Brain microvascular endothelial cell (primary cell): ENCODE measurements at regions of chrX and their contacts with region 1.

Region 1: GRCh38 chrX:11111038-11111851 is at the start of gene HCCS:
- DNase-seq: peak; percentile 79
- H3K4me3 ChIP-seq: peak within 1 kb of the TSS; percentile 83
- H3K27ac ChIP-seq: peak within 1 kb of the TSS; percentile 94
- H3K27me3 ChIP-seq: no peaks in the 10 kb centered on the region
- CTCF ChIP-seq: peak; percentile 14

Region 2: GRCh38 chrX:10189317-10190268 is 921.7 kb before region 1 on chrX:
- in situ Hi-C with region 1: loop called (anchors 25 kb)
- DNase-seq: peak; percentile 65
- H3K4me3 ChIP-seq: no peak overlapping the region
- H3K27ac ChIP-seq: peak overlapping the region; percentile 29
- H3K27me3 ChIP-seq: no peaks in the 10 kb centered on the region
- CTCF ChIP-seq: peak; percentile 83

Region 3: DNA sequence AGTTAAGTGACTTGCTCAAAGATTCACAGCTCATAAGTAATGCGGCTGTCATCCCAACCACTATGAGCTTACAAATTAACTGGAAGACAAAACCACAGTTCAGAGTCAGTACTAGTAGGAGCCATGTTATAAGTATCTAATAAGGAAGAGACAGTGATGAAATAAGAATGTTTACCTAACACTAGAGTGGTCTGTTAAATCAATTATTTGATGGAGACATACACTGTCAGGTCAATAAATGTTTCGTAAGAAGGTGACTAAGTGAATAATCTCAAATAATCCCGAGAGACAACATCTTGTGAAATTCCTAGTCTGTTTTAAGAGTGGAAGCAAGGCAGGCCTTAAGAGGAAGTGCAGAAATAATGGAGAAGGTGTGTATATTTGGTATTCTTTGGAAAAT is 156.2 kb after region 1 on chrX:
- in situ Hi-C with region 1: no loop called
- DNase-seq: no peak
- H3K4me3 ChIP-seq: no peak overlapping the region
- H3K27ac ChIP-seq: no peak overlapping the region
- H3K27me3 ChIP-seq: no peaks in the 10 kb centered on the region
- CTCF ChIP-seq: no peak

Region 4: DNA sequence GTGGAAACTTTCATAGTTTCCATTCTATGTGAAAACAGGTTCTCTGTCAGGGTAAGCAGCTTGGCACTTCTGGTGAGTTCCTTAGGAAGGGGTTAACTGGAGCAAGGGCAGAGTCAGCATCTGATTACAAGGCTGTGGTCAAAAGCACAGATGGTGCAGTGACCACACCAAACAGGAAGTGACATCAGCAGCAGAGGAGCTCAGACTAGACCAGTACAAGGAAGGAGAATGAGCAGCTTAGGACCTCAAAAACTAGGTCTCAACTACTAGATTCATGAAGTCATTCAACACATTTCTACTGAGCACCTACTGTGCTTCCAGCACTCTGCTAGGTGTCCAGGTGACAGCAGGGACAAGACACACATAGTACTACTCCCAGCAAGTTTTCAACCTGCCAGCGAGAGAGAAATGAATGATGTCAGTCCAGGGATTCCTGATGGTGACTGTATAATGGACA is 312.1 kb after region 1 on chrX:
- in situ Hi-C with region 1: no loop called
- DNase-seq: peak; percentile 72
- H3K4me3 ChIP-seq: no peak overlapping the region
- H3K27ac ChIP-seq: no peak overlapping the region
- H3K27me3 ChIP-seq: no peaks in the 10 kb centered on the region
- CTCF ChIP-seq: no peak